ENCODE measurements at regions of chr11 and their contacts with region 1.

Region 1: DNA sequence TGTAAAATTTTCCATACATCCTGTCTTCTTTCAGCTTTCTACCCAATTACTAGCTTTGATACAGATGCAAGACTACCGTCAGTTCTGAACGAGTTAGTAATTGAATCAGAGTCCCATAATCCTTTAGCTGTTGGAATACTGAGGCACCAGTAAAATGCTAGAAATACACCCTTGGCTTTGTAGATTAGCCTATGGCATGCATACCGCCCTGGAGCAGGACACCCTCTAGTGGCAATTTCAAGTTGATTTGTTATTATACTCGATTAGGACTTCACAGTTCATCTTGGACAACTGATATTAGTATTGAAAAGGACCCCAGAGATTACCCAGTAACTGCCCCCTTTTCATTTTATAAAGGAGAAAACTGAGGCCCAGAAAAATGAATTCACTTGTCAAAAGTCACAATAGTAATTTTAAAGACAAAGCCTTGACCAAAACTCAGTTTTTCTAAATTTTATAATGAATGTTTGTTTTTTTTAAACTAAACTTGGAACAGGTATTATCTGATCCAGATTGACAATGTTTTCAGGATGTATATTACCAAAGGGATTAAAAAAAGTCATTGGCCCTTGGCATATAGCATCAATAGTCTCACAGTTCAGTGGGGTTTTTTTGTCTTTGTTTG is 72.6 kb downstream of the HIPK3 start:
- DNase-seq: peak; percentile 59
- H3K4me3 Mint-ChIP-seq: no peak overlapping the region
- H3K27ac Mint-ChIP-seq: no peak overlapping the region
- H3K4me1 Mint-ChIP-seq: no peaks in the 10 kb centered on the region
- H3K27me3 Mint-ChIP-seq: no peaks in the 10 kb centered on the region

Region 2: DNA sequence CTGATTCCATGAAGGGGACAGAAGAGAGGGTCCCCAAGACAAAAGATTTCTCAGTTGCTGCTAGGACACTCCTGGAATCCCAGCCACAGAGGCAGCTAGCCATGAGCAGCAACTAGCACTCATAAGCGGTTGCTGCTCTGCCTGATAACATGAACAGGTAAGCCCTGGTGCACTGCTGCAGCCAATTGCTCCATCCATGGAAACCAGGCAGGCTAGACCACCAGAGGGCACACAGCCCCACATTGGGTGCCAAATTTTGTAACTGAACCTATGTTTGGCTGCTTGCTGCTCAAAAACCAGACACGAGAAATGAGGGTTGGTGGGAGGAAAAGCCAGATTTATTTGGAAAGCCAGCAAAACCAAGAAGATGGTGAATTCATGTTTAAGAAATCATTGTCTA is 459.1 kb before region 1 on chr11:
- CTCF ChIA-PET with region 1: no interaction called
- DNase-seq: peak; percentile 34
- H3K4me3 Mint-ChIP-seq: no peak overlapping the region
- H3K27ac Mint-ChIP-seq: no peak overlapping the region
- H3K4me1 Mint-ChIP-seq: no peaks in the 10 kb centered on the region
- H3K27me3 Mint-ChIP-seq: peaks cover 35% of the 10 kb centered on the region

Region 3: GRCh38 chr11:33161120-33162005 is 168.5 kb before region 1 on chr11 and contains the start of gene CSTF3:
- CTCF ChIA-PET with region 1: interaction called, 32 read pairs
- DNase-seq: peak; percentile 98
- H3K4me3 Mint-ChIP-seq: peak within 1 kb of the TSS; percentile 100
- H3K27ac Mint-ChIP-seq: peak within 1 kb of the TSS; percentile 95
- H3K4me1 Mint-ChIP-seq: peaks cover 39% of the 10 kb centered on the region
- H3K27me3 Mint-ChIP-seq: no peaks in the 10 kb centered on the region

Measured in activated naive CD4-positive, alpha-beta T cell treated with anti-CD3 and anti-CD28 coated beads, Interleukin-2, amount 10 ng/mL, durations not matched to agents 7 days and 5 days (primary cell).